ENCODE measurements at regions of chr4 and their contacts with region 1.

Region 1: DNA sequence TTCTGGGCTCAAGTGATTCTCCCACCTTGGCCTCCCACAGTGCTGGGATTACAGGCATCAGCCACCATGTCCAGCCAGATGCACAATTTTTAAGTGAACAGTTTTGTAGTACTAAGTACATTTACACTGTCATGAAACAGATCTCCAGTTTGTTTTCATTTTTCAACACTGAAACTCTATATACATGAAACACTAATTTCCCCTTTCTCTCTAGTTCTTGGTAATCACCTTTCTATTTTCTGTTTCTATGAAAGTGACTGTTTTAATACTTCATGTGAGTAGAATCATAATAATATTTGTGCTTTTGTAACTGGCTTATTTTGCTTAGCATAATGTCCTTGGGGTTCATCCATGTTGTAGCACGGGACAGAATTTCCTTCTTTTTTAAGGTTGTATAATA is 237.4 kb downstream of the CAMK2D start:
- DNase-seq: no peak
- H3K4me3 Mint-ChIP-seq: no peak overlapping the region
- H3K27ac Mint-ChIP-seq: no peak overlapping the region
- H3K4me1 Mint-ChIP-seq: peaks cover 15% of the 10 kb centered on the region
- H3K27me3 Mint-ChIP-seq: no peaks in the 10 kb centered on the region

Region 2: DNA sequence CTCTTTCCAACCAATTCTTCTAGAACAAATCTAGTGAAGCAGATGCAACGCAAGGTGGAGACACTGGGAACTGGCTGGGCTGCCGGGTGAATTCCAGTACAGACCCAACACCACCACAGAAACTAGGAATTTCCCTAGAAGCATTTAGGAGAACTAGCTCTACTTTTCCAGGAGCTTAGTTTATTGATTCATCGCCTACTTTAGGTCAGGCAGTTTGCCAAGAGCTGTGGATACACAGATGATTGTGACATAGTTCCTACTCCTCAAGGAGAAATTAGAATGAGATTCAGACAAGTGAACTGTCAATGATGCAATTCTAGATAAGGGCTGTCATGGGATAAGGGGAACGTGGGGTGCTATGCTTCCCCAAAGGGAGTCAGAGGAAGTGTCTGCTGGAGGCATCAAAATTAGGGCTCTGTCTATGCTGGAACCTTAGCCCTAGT is 112.6 kb before region 1 on chr4:
- CTCF ChIA-PET with region 1: no interaction called
- intact Hi-C with region 1: loop called (anchors 5 kb)
- DNase-seq: no peak
- H3K4me3 Mint-ChIP-seq: no peak overlapping the region
- H3K27ac Mint-ChIP-seq: no peak overlapping the region
- H3K4me1 Mint-ChIP-seq: peaks cover 9% of the 10 kb centered on the region
- H3K27me3 Mint-ChIP-seq: peaks cover 5% of the 10 kb centered on the region

Region 3: DNA sequence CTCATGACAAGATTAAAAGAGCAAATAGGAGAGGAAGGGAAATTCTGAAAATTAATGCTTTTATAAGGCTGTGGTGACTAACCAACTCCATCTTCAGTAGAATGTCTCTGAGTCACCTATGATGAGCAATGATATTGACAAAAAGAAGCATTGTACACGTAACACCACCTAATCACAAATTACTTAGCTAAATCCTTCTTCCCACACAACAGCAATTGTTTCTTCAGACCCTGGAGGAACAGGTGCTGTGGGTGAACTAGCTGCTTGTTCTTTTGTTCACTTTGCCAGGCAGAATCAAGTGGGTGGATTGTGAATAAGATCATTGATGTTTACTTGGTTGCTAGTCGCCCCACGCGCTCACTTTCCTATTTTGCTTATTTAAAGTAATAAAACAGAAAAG is 78.1 kb before region 1 on chr4:
- CTCF ChIA-PET with region 1: no interaction called
- intact Hi-C with region 1: loop called (anchors 2 kb)
- DNase-seq: no peak
- H3K4me3 Mint-ChIP-seq: no peak overlapping the region
- H3K27ac Mint-ChIP-seq: peak overlapping the region; percentile 66
- H3K4me1 Mint-ChIP-seq: peaks cover 27% of the 10 kb centered on the region
- H3K27me3 Mint-ChIP-seq: no peaks in the 10 kb centered on the region

Region 4: DNA sequence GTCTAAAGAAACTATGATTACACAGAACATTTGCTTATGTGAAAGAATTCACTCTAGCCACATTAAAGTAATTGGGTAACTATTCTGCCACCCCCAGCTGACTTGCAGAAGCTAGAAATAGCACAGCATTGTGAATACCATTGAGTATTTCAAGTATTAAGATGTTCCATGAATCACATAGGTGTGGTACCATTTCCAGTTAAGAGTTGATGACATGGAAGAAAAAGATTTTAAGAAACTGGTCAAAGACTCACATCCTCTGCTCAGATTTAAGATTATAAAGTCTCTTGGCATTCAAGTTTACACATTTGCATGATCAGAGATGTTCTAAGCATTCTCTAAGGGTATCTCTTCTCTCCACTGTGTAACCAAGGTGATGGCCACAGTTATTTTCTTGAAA is 50.1 kb before region 1 on chr4:
- CTCF ChIA-PET with region 1: no interaction called
- intact Hi-C with region 1: loop called (anchors 1 kb)
- DNase-seq: peak; percentile 55
- H3K4me3 Mint-ChIP-seq: no peak overlapping the region
- H3K27ac Mint-ChIP-seq: peak overlapping the region; percentile 84
- H3K4me1 Mint-ChIP-seq: peaks cover 56% of the 10 kb centered on the region
- H3K27me3 Mint-ChIP-seq: no peaks in the 10 kb centered on the region

Region 5: DNA sequence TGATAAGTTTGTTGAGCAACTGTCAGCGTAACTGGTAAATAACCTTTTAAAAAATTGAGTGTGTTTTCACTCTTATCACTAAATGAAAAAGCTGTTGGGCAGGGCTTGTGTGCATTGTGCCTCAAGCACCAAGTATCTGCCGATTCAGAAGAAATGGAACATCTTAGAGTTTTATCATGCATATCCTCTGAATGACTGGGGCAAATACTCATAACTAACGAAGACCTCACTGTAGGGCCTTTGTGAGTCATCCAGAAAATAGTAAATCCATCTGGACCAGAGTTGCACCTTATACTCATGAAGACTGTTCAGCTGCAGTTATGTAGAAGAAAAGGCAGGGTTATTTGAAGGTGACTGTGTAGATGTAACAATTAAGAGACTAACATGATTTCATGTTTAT is 15.3 kb after region 1 on chr4:
- CTCF ChIA-PET with region 1: interaction called, 3 read pairs
- intact Hi-C with region 1: loop called (anchors 1 kb)
- DNase-seq: peak; percentile 39
- H3K4me3 Mint-ChIP-seq: no peak overlapping the region
- H3K27ac Mint-ChIP-seq: peak overlapping the region; percentile 67
- H3K4me1 Mint-ChIP-seq: peaks cover 33% of the 10 kb centered on the region
- H3K27me3 Mint-ChIP-seq: no peaks in the 10 kb centered on the region

Measured in activated naive CD4-positive, alpha-beta T cell treated with anti-CD3 and anti-CD28 coated beads for 36 hours (primary cell).